Activated naive CD4-positive, alpha-beta T cell treated with anti-CD3 and anti-CD28 coated beads for 36 hours (primary cell): ENCODE measurements at regions of chr20 and their contacts with region 1.

Region 1: GRCh38 chr20:46363800-46364634 is 42.4 kb downstream of the ELMO2 start:
- DNase-seq: peak; percentile 87
- H3K4me3 Mint-ChIP-seq: peak overlapping the region; percentile 88
- H3K27ac Mint-ChIP-seq: peak overlapping the region; percentile 86
- H3K4me1 Mint-ChIP-seq: peaks cover 80% of the 10 kb centered on the region
- H3K27me3 Mint-ChIP-seq: no peaks in the 10 kb centered on the region

Region 2: DNA sequence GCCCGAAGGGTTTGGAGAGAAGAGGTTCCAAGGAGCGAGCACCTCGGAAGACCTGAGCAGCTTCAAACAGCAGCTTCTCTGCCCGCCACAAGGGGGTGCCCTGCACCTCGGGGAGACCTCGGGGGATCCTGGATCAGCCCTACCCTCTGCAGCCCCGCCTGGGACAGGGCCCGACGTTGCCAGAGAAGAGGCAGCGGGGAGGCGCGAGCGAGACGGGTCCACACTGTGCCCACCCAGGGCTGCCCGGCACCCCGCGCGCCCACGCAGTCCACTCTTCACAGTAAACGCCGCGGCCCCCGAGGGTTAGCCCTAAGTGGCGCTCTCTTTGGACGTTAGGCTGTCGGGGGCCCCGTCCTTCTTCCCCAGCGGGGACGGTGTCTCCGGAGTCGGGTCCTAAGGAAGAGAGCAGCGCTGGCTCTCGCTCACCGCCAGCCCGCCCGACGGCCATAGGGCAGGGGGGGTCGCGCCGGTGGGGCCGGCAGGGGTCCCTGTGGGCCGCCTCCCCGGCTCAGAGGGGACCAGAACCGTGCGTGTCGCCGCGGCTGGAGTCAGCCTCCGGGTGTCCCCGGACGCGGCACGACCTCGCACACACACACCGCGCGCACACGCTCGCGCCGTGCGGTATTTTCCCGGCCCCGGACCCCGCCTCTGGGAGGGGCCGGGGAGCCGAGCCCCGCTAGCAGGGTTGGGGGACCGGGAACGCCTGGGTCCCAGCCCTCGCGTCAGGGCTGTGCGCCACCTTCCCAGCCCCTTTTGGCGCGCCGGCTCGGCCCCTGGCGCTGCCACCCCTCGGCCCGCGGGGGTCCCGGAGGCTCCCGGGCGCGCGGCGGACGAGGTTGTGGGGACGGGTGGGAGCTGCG is 56.6 kb before region 1 on chr20:
- CTCF ChIA-PET with region 1: interaction called, 3 read pairs
- intact Hi-C with region 1: loop called (anchors 1 kb)
- DNase-seq: peak; percentile 81
- H3K4me3 Mint-ChIP-seq: peak overlapping the region; percentile 25
- H3K27ac Mint-ChIP-seq: no peak overlapping the region
- H3K4me1 Mint-ChIP-seq: peaks cover 7% of the 10 kb centered on the region
- H3K27me3 Mint-ChIP-seq: peaks cover 57% of the 10 kb centered on the region

Region 3: GRCh38 chr20:46349035-46349741 is 14.8 kb before region 1 on chr20:
- CTCF ChIA-PET with region 1: interaction called, 11 read pairs
- intact Hi-C with region 1: no loop called
- DNase-seq: peak; percentile 67
- H3K4me3 Mint-ChIP-seq: no peak overlapping the region
- H3K27ac Mint-ChIP-seq: no peak overlapping the region
- H3K4me1 Mint-ChIP-seq: peaks cover 16% of the 10 kb centered on the region
- H3K27me3 Mint-ChIP-seq: no peaks in the 10 kb centered on the region

Region 4: DNA sequence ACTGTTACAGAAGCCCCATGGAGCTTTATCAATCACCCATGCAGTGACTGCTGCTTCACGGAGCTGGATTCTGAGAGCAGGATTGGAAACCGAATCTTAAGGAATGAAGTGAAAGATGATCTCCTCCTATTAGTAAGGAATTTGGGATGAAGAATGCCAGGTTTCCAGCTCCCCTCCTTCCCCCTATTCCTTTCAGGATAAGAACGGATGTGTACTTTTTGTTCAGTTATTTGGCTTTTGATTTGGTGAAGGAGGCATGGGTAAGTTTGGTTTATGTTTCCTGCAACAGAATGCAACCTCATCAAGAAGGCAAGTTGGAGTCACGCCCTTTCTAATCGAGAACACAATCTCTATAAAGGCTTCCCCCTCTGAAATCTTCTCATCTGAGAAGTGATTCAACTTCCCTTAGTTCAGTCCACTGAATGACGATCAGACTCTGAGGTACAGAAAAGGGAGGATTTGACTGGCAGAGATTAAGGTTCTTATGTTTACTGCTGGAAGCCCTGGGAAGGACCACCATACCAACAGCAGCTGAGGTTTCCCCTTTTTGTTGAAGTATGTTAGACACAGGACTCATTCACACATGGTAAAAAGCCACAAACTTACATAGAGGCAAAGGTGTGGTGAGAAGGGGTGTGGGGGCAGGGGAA is 36.9 kb after region 1 on chr20:
- CTCF ChIA-PET with region 1: interaction called, 3 read pairs
- intact Hi-C with region 1: loop called (anchors 1 kb)
- DNase-seq: peak; percentile 63
- H3K4me3 Mint-ChIP-seq: peak overlapping the region; percentile 59
- H3K27ac Mint-ChIP-seq: peak overlapping the region; percentile 91
- H3K4me1 Mint-ChIP-seq: peaks cover 60% of the 10 kb centered on the region
- H3K27me3 Mint-ChIP-seq: no peaks in the 10 kb centered on the region

Region 5: GRCh38 chr20:46406199-46406985 is 42.4 kb after region 1 on chr20 and contains the start of gene ELMO2:
- CTCF ChIA-PET with region 1: interaction called, 16 read pairs
- intact Hi-C with region 1: loop called (anchors 1 kb)
- DNase-seq: peak; percentile 98
- H3K4me3 Mint-ChIP-seq: peak within 1 kb of the TSS; percentile 88
- H3K27ac Mint-ChIP-seq: peak within 1 kb of the TSS; percentile 88
- H3K4me1 Mint-ChIP-seq: peaks cover 55% of the 10 kb centered on the region
- H3K27me3 Mint-ChIP-seq: no peaks in the 10 kb centered on the region
- total RNA-seq, gene ELMO2: 76.8 to 81.0 TPM

Region 6: GRCh38 chr20:46423882-46424482 is 60.0 kb after region 1 on chr20:
- CTCF ChIA-PET with region 1: no interaction called
- intact Hi-C with region 1: no loop called
- DNase-seq: no peak
- H3K4me3 Mint-ChIP-seq: no peak overlapping the region
- H3K27ac Mint-ChIP-seq: no peak overlapping the region
- H3K4me1 Mint-ChIP-seq: no peaks in the 10 kb centered on the region
- H3K27me3 Mint-ChIP-seq: peaks cover 17% of the 10 kb centered on the region